ENCODE measurements at regions of chr18 and their contacts with region 1.

Region 1: DNA sequence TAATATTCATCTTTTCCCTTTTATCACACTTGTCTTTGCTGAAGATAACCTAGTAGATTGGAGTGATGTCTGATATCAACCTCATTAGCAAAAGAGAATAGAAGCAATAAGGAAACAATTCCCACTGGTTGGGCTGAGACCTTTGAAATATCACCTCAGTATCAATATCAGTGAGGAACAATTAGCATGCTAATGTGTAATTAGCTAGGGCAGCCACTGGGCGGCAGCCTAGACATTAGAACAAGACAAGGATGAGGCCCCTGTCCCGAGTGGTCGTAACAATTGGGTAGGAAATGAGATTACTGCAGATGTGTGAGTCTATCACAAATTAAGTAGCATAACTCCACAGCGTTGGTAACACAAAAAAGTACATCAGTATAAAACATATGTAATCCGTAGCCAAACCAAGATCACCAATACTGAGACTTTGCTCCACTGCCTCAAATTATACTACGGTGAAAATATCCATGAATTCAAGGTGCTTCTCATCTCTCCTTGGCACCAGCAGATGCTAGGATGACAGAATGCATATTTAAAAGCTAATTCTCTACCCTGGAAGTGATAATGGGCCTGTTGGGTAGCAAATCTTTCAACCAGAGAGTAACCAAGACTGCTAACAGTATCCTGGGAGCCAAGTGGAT is 99.1 kb downstream of the ALPK2 start:
- DNase-seq: peak; percentile 36
- H3K4me3 Mint-ChIP-seq: no peak overlapping the region
- H3K27ac Mint-ChIP-seq: no peak overlapping the region
- H3K4me1 Mint-ChIP-seq: peaks cover 30% of the 10 kb centered on the region
- H3K27me3 Mint-ChIP-seq: peaks cover 15% of the 10 kb centered on the region

Region 2: DNA sequence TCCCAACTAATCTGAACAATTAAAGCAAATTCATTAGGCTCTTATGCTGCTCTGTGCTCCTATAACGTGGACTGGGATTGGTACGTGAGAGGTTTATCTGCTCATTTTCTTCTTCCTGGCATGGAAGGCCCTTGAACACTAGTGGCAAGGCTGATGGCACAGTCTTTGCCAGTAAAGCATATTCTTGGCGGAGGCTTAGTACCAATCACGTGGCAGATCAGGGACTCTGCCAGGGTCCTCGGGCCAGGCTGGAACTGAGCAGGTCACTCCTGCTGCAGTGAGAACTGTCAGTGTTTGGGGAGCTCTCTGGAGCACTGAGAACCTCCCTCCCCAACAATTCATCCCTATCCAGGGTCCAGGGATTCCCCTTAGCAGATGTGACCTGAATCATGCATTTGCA is 102.7 kb after region 1 on chr18:
- intact Hi-C with region 1: no loop called
- DNase-seq: no peak
- H3K4me3 Mint-ChIP-seq: no peak overlapping the region
- H3K27ac Mint-ChIP-seq: no peak overlapping the region
- H3K4me1 Mint-ChIP-seq: peaks cover 34% of the 10 kb centered on the region
- H3K27me3 Mint-ChIP-seq: peaks cover 10% of the 10 kb centered on the region

Region 3: GRCh38 chr18:59070181-59070912 is 540.5 kb after region 1 on chr18:
- intact Hi-C with region 1: loop called (anchors 10 kb)
- DNase-seq: peak; percentile 65
- H3K4me3 Mint-ChIP-seq: no peak overlapping the region
- H3K27ac Mint-ChIP-seq: no peak overlapping the region
- H3K4me1 Mint-ChIP-seq: peaks cover 5% of the 10 kb centered on the region
- H3K27me3 Mint-ChIP-seq: peaks cover 13% of the 10 kb centered on the region